IMR-90 (cell line): ENCODE measurements at regions of chr17 and their contacts with region 1.

Region 1: DNA sequence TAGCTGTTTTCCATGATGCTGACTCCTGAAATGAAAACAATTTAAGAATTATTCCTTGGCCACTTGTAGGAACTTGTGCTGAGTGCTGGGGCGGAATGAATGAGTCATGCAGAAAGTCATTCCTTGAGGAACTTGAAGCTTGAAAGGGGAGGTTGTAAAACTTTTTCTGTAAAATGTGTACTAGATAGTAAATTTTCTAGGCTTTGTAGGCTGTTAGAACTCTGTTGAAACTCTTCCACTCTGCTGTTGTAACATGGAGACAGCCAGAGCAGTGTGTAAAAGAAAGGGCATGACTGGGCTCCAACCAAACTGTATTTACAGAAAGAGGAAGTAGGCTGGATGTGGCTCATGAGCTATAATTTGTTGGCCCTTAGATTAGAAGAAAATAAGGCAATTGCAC is 46.1 kb downstream of the ABCA8 start:
- DNase-seq: peak; percentile 93
- ATAC-seq: peak; percentile 93
- H3K4me3 ChIP-seq: no peak overlapping the region
- H3K27ac ChIP-seq: peak overlapping the region; percentile 76
- H3K4me1 ChIP-seq: peaks cover 13% of the 10 kb centered on the region
- H3K27me3 ChIP-seq: no peaks in the 10 kb centered on the region
- CTCF ChIP-seq: no peak
- POLR2A ChIP-seq: no peak
- RAD21 ChIP-seq: no peak

Region 2: GRCh38 chr17:68794636-68795434 is 114.2 kb before region 1 on chr17:
- CTCF ChIA-PET with region 1: no interaction called
- POLR2A ChIA-PET with region 1: no interaction called
- dilution Hi-C with region 1: no loop called
- in situ Hi-C with region 1: no loop called
- intact Hi-C with region 1: loop called (anchors 5 kb)
- DNase-seq: peak; percentile 60
- ATAC-seq: peak; percentile 68
- H3K4me3 ChIP-seq: no peak overlapping the region
- H3K27ac ChIP-seq: peak overlapping the region; percentile 85
- H3K4me1 ChIP-seq: peaks cover 13% of the 10 kb centered on the region
- H3K27me3 ChIP-seq: no peaks in the 10 kb centered on the region
- CTCF ChIP-seq: peak; percentile 52
- POLR2A ChIP-seq: no peak
- RAD21 ChIP-seq: peak; percentile 23; the same call in 1 of the 2 replicates

Region 3: GRCh38 chr17:68941761-68942160 is 32.7 kb after region 1 on chr17:
- CTCF ChIA-PET with region 1: no interaction called
- POLR2A ChIA-PET with region 1: no interaction called
- dilution Hi-C with region 1: no loop called
- in situ Hi-C with region 1: no loop called
- intact Hi-C with region 1: no loop called
- DNase-seq: no peak
- ATAC-seq: no peak
- H3K4me3 ChIP-seq: no peak overlapping the region
- H3K27ac ChIP-seq: no peak overlapping the region
- H3K4me1 ChIP-seq: no peaks in the 10 kb centered on the region
- H3K27me3 ChIP-seq: no peaks in the 10 kb centered on the region
- CTCF ChIP-seq: no peak
- POLR2A ChIP-seq: no peak
- RAD21 ChIP-seq: no peak